Gastrocnemius medialis (tissue), 4 donors: ENCODE measurements at regions of chr16 and their contacts with region 1.

Region 1: DNA sequence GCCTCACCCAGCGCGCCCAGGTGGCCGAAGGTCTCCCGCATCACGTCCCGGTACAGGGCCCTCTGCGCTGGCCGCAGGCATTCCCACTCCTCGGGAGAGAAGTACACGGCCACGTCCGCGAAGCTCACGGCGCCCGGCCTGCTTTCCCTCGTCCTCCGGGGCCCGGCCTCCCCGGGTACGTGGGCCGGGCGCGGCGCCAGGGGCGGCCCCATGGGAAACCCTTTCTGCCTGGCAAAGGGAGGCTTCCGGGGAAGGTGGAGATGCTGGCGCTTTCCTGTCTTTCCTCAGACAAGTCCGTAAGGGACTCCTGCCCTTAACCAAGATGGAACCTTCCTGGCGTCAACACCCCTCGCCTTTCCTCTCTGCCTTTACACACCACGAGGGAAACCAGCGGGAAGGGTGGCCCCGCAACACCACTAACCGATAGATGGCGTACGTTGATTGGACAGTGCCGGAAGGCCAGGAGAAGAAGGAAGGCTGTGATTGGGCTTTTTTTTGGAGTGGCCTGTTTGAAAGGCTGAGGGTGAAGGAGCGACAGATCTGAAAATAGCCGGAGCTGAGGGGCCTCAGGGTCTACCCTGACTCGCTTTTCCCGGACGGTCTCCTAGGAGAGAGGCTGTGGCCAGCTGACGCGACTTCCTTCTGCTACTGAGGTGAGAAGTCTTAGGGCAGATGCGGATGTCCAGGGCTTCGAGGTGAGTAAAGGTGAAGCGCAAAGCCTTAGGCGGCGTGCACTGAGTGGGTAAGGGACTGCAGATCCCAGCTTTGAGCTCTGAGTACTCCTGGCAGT is at the start of gene ZNF785:
- DNase-seq: peak; percentile 98 to 99
- ATAC-seq: peak; percentile 100
- H3K4me3 ChIP-seq: peak within 1 kb of the TSS; percentile 80 to 93 (median 90)
- H3K27ac ChIP-seq: peak within 1 kb of the TSS; percentile 90 to 97 (median 94)
- H3K4me1 ChIP-seq: peaks cover 14% of the 10 kb centered on the region in 2 donors
- H3K27me3 ChIP-seq: no peaks in the 10 kb centered on the region
- CTCF ChIP-seq: peak in 4 of 5 experiments; percentile 4 to 42 (median 30)
- POLR2A ChIP-seq: peak in 1 of 2 donors; percentile 24
- total RNA-seq, gene ZNF785: 0.70 to 3.2 (median 1.0) TPM

Region 2: DNA sequence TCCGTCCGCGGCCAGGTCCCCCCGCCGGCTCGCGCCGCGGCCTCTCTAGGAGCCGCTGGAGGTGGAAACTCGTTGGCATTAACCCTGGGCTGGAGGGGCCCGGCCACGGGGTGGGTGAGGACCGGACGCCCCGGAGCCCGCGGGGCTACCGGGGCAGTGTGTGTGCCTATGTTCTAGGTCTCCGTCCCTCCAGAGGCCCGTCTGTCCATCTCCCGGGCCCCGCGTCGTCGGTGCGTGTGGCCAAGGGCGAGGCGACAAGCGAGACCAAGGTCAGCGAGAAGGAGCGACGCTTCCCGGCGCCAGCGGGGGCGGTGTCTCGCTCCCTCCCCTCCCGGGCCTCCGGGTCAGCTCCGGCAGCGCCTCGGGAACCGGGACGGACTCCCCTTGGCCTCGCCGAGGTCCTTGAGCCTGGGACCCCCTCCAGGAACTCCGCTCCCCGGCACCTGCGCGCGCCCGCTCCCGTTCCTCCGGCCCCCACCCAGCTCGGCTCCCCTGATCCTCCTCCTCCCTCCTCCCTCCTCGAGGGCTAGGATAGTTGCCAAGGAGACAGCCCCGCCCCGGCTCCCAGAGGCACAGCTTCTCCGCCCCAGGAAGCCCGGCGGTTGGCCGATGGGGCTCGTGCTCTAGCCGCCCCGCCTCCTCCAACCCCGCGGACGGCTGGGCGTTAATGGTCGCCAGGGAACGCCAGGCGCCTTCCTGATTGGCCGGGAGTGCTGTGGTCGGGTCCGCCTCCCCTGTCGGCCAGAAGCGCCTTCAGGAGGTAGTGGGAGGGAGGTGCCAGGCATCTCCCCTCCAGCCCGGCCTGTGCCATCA is 58.6 kb before region 1 on chr16:
- in situ Hi-C with region 1: no loop called
- intact Hi-C with region 1: loop called (anchors 2 kb)
- DNase-seq: peak; percentile 98
- ATAC-seq: peak; percentile 87 to 91
- H3K4me3 ChIP-seq: peak overlapping the region; percentile 66 to 91 (median 86)
- H3K27ac ChIP-seq: peak overlapping the region; percentile 96 to 100 (median 97)
- H3K4me1 ChIP-seq: peaks cover 19 to 36% of the 10 kb centered on the region in 2 donors
- H3K27me3 ChIP-seq: no peaks in the 10 kb centered on the region
- CTCF ChIP-seq: peak in 4 of 5 experiments; percentile 45 to 62 (median 52)
- POLR2A ChIP-seq: peak; percentile 80 to 88

Region 3: DNA sequence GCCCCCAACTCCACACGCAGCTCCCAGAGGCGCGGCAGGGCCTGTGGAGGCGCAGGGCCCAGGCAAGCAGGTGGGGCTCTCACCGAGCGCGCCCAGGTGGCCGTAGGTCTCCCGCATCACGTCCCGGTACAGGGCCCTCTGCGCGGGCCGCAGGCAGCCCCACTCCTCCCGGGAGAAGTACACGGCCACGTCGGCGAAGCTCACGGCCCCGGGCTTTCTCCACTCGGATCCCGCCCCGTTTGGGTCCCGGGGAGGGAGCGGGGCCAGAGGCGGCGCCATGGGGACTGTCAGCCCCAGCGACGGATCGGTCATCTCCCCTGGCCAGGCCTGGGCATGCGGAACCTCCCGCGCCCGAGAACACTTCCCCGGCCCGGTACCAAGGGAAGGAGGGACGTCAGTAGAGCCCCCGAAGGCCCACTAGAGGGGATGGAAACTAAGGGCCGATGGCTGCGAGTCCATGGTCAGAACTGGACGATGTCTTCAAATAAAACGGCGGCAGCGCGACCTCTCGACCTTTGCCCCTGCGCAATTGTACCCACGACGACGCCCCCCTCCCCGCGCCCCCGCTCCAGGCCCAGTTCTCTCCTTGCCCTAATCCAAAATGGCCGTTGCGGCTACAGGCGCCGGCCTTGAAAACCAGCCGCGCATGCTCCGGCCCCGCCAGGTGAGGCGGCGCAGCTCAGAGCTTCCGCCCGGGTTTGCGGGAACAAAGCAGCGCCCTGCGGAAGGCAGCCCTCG is 51.1 kb before region 1 on chr16 and contains the start of gene ZNF747:
- in situ Hi-C with region 1: no loop called
- intact Hi-C with region 1: loop called (anchors 1 kb)
- DNase-seq: peak; percentile 93 to 95
- ATAC-seq: peak; percentile 87 to 91
- H3K4me3 ChIP-seq: peak within 1 kb of the TSS; percentile 65 to 88 (median 82)
- H3K27ac ChIP-seq: peak within 1 kb of the TSS; percentile 90 to 96 (median 94)
- H3K4me1 ChIP-seq: peaks cover 23 to 24% of the 10 kb centered on the region in 2 donors
- H3K27me3 ChIP-seq: no peaks in the 10 kb centered on the region
- CTCF ChIP-seq: peak in 1 of 5 experiments; percentile 6
- POLR2A ChIP-seq: peak; percentile 71 to 74
- total RNA-seq, gene ZNF747: 8.6 to 17.5 (median 13.1) TPM

Region 4: GRCh38 chr16:30557957-30558788 is 27.4 kb before region 1 on chr16 and contains the start of gene ZNF764:
- in situ Hi-C with region 1: no loop called
- intact Hi-C with region 1: loop called (anchors 1 kb)
- DNase-seq: peak; percentile 99
- ATAC-seq: peak; percentile 94 to 98
- H3K4me3 ChIP-seq: peak within 1 kb of the TSS; percentile 88 to 99 (median 98)
- H3K27ac ChIP-seq: peak within 1 kb of the TSS; percentile 95 to 99 (median 98)
- H3K4me1 ChIP-seq: peaks cover 22 to 28% of the 10 kb centered on the region in 2 donors
- H3K27me3 ChIP-seq: no peaks in the 10 kb centered on the region
- CTCF ChIP-seq: no peak
- POLR2A ChIP-seq: peak; percentile 49
- total RNA-seq, gene ZNF764: 3.7 to 5.5 (median 4.9) TPM

Region 5: DNA sequence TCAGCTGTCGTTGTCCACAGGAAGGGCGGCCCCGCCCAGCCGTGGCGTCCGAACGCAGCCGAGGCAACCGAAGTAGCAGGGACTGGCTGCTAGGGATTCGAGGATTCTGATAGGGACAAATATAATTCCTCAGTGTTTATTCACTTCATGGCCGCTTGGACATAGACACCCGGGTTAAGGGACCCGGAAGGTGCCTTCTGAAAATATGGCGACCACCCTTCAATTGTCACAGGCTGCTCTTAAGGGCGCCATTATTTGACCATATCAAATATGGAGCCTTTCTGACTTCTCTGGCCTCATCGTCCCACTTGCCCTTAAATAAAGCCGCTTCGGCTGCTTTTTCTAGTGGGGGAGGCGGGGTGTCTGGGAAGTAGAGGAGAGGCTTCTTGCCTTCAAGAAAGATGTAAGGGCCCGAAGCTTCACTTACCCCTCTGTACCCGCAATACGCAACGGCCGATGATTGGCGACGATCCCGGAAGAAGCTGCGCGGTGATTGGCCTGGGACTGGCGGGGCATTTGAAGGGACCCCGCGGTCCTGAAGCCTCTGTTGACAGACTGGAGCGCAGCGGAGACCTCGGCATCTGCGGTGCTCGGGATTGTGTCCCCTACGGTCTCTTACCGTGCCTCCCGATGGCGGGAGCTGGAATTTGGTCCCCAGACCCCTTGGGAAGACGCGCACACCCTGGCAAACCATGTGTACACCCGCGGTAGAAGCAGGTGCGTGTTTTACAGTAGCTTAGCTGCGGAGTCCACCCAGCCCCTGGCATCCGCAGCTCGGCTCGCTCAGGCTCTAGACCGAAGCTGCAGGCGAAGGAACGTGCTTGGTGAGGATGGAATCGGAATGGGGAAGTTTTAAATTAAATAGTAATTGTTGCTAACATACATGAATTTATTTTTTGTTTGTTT is 13.6 kb before region 1 on chr16 and contains the start of gene ZNF688:
- in situ Hi-C with region 1: no loop called
- intact Hi-C with region 1: loop called (anchors 1 kb)
- DNase-seq: peak; percentile 95 to 96
- ATAC-seq: peak; percentile 96
- H3K4me3 ChIP-seq: peak within 1 kb of the TSS; percentile 75 to 96 (median 86)
- H3K27ac ChIP-seq: peak within 1 kb of the TSS; percentile 84 to 99 (median 98)
- H3K4me1 ChIP-seq: peaks cover 21 to 24% of the 10 kb centered on the region in 2 donors
- H3K27me3 ChIP-seq: no peaks in the 10 kb centered on the region
- CTCF ChIP-seq: no peak
- POLR2A ChIP-seq: peak in 1 of 2 donors; percentile 68
- total RNA-seq, gene ZNF688: 11.0 to 38.2 (median 18.5) TPM

Region 6: DNA sequence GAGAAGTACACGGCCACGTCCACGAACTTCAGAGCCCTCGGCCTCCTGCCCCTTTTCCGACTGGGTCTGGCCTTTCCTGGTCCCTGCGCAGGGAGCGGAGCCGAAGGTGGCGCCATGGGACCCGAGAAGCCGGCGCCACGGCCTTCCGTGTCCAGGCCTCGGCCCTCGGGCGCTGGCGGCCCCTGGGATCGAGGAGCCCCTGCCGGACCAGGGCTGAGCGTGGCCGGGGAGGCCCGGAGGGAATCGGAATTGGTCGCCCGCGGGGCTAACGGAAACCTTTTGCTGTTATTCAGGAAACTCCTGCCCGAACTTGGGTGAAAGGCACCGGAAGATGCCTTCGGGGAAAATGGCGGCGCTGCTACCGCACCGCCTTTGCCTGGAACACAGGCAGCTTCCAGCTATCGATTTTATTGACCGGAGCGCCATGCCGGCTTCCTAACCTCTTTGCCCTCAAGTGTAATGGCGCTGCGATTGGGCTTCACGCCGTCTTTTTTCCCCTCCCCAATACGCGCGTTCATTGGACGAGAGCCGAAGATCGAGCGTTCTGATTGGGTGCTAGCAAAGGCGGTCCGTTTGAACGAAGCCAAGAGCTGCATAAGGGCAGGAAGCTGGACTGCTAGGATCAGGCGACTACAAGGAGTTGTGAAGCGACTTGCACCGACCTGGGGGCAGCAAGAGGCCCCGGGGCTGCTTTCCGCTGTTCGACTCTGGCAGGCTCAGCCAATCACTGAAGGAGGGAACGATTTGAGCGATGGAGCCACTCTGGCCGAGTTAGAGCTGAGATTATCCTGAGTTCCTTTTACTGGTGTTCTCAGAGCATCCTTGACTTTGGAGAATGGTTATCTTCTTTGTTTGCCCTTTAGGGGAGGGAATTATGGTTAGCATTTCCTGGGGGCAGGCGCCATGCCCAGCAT is 24.6 kb after region 1 on chr16 and contains the start of gene ZNF689:
- in situ Hi-C with region 1: no loop called
- intact Hi-C with region 1: loop called (anchors 1 kb)
- DNase-seq: peak; percentile 94
- ATAC-seq: peak; percentile 100
- H3K4me3 ChIP-seq: peak within 1 kb of the TSS; percentile 80 to 100 (median 98)
- H3K27ac ChIP-seq: peak within 1 kb of the TSS; percentile 91 to 99 (median 94)
- H3K4me1 ChIP-seq: no peaks in the 10 kb centered on the region
- H3K27me3 ChIP-seq: no peaks in the 10 kb centered on the region
- CTCF ChIP-seq: no peak
- POLR2A ChIP-seq: peak in 1 of 2 donors; percentile 45
- total RNA-seq, gene ZNF689: 2.9 to 6.3 (median 6.1) TPM

Region 7: DNA sequence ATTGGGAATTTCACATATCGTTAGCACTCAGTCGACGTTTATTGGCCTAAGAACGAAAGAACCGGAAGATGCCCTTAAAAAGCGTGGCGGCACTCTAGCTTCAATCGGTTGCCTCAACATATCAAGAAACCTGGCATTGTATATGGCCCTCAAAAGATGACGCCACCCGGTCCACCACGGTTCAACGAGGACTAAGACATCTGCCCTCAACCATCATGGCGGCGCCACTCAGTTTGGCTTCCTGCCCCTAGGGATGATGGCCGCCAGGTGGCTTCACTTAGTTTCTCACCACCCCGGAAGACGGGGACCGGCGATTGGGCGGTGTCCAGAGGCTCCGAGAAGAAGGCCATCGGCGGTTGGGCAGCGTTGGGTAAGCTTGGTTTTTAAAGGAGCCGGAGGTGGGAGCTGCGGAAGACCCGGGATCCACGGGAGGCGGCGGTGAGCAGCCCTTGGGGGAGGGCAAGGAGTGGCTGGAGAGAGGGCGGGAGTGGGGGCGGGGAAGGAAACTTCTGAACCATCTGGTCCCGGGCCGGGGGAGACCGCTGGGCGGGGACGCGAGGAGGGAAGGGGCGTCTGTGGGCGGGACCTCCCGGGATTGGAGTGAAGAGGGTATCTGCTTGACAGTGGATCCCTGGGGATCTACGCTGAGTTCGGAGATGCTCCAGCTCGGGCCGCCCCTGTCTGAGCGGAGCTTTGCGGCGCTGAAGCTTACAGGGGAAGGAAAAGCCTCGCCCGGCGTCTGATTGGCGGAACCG is 65.0 kb after region 1 on chr16 and contains the start of gene PRR14:
- in situ Hi-C with region 1: no loop called
- intact Hi-C with region 1: loop called (anchors 2 kb)
- DNase-seq: peak; percentile 100
- ATAC-seq: peak; percentile 90 to 91
- H3K4me3 ChIP-seq: peak within 1 kb of the TSS; percentile 83 to 96 (median 93)
- H3K27ac ChIP-seq: peak within 1 kb of the TSS; percentile 94 to 99 (median 98)
- H3K4me1 ChIP-seq: peaks cover 6 to 18% of the 10 kb centered on the region in 2 donors
- H3K27me3 ChIP-seq: no peaks in the 10 kb centered on the region
- CTCF ChIP-seq: peak in 4 of 5 experiments; percentile 38 to 69 (median 48)
- POLR2A ChIP-seq: peak in 1 of 2 donors; percentile 74
- total RNA-seq, gene PRR14: 8.8 to 28.4 (median 17.8) TPM